Caco-2 (cell line): ENCODE measurements at regions of chr22 and their contacts with region 1.

Region 1: DNA sequence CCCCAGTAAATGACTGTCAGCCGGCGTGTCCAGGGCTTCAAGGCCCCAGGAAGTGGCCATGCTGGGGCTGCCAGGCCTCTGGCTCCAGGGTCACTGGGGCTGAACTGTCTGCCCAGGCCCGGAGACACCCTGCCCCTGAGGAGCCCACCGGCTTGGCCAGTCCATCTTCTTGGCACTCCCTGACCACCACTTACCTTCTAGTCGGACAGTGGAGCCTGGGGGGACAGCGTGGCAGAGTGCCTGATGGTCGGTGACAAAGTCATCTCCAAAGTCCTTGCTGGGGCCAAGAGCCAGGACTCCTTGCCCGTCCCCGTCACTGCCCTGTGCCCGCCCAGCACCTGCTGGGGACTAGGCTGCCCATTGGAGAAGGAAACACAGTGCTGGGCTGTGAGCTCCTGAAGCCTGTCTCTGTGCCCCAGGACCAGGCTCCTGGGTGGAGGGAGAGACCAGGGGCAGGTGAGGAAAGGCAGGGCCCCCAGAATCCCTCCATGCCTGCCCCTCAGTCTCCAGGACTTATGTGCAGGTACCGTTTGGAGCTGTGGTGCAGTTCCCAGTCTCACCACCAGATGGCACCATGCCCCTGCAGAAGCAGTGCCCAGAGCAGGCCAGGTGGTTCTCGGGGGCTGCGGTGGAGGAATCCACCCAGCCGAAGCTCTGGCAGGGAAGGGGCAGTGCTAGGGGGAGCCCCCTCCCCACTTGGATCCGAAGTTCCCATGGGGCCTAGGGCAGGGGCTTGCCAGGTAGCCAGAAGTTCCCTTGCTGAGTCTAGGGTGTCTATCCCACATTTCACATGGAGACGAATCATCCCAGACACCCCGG is 6.0 kb upstream of the CCDC188 start:
- DNase-seq: peak; percentile 79 to 86
- H3K4me3 ChIP-seq: no peak overlapping the region
- H3K4me3 Mint-ChIP-seq: no peak overlapping the region
- H3K27ac Mint-ChIP-seq: no peak overlapping the region
- H3K4me1 ChIP-seq: no peaks in the 10 kb centered on the region
- H3K4me1 Mint-ChIP-seq: no peaks in the 10 kb centered on the region
- H3K27me3 ChIP-seq: no peaks in the 10 kb centered on the region
- H3K27me3 Mint-ChIP-seq: peaks cover 3% of the 10 kb centered on the region
- CTCF ChIP-seq: peak; percentile 96 to 97

Region 2: GRCh38 chr22:20192972-20193760 is 36.3 kb after region 1 on chr22:
- CTCF ChIA-PET with region 1: no interaction called
- POLR2A ChIA-PET with region 1: no interaction called
- intact Hi-C with region 1: no loop called
- DNase-seq: peak in 1 of 2 experiments; percentile 33
- H3K4me3 ChIP-seq: no peak overlapping the region
- H3K4me3 Mint-ChIP-seq: no peak overlapping the region
- H3K27ac Mint-ChIP-seq: no peak overlapping the region
- H3K4me1 ChIP-seq: no peaks in the 10 kb centered on the region
- H3K4me1 Mint-ChIP-seq: peaks cover 1% of the 10 kb centered on the region
- H3K27me3 ChIP-seq: no peaks in the 10 kb centered on the region
- H3K27me3 Mint-ChIP-seq: peaks cover 4% of the 10 kb centered on the region
- CTCF ChIP-seq: peak in 1 of 2 experiments; percentile 15

Region 3: DNA sequence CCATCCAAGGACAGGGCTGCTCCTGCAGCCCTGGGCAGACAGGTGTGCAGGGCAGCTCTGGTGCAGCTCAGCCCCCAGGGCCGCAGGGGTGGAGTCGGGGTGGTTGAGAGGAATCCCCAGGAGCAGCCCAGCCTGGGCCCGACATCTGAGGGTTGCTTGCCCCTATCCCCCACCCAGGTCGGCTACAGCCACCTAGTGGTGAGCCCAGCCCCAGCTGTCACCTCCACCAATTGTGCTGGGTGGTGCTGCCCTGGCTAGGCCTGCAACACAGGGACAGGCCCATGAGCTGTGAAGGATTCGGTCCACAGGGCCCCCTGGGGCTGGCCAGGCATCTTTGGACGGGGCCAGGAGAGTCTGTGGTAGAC is 81.7 kb after region 1 on chr22:
- CTCF ChIA-PET with region 1: interaction called, 24 read pairs
- POLR2A ChIA-PET with region 1: no interaction called
- intact Hi-C with region 1: loop called (anchors 1 kb)
- DNase-seq: peak; percentile 70 to 75
- H3K4me3 ChIP-seq: no peak overlapping the region
- H3K4me3 Mint-ChIP-seq: no peak overlapping the region
- H3K27ac Mint-ChIP-seq: no peak overlapping the region
- H3K4me1 ChIP-seq: no peaks in the 10 kb centered on the region
- H3K4me1 Mint-ChIP-seq: no peaks in the 10 kb centered on the region
- H3K27me3 ChIP-seq: no peaks in the 10 kb centered on the region
- H3K27me3 Mint-ChIP-seq: no peaks in the 10 kb centered on the region
- CTCF ChIP-seq: peak; percentile 63 to 91

Region 4: DNA sequence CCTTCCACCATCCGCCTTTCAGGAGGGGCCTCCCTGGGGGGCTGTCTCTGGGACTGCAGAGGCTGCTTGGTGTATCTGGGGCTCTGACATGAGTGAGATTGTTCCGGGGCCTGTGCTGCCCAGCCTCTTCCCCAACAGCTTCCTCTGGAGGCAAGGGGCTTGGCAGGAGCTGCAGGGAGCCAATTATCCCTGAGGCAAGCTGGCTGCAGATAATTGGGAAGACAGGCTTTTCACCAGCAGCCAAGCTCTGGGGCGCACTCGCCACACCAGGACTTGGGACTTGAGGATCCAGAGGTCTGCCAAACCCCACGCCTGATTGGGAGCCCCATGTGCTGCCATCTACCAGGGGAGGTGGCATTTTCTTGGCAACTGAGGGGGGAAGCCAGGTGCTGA is 126.8 kb after region 1 on chr22:
- CTCF ChIA-PET with region 1: interaction called, 11 read pairs
- POLR2A ChIA-PET with region 1: no interaction called
- intact Hi-C with region 1: loop called (anchors 1 kb)
- DNase-seq: no peak
- H3K4me3 ChIP-seq: no peak overlapping the region
- H3K4me3 Mint-ChIP-seq: no peak overlapping the region
- H3K27ac Mint-ChIP-seq: no peak overlapping the region
- H3K4me1 ChIP-seq: no peaks in the 10 kb centered on the region
- H3K4me1 Mint-ChIP-seq: no peaks in the 10 kb centered on the region
- H3K27me3 ChIP-seq: no peaks in the 10 kb centered on the region
- H3K27me3 Mint-ChIP-seq: peaks cover 7% of the 10 kb centered on the region
- CTCF ChIP-seq: no peak